ENCODE measurements at regions of chrX and their contacts with region 1.

Region 1: GRCh38 chrX:24241822-24242648 is 71.8 kb downstream of the SUPT20HL2 start:
- DNase-seq: peak; percentile 58
- H3K4me3 Mint-ChIP-seq: no peak overlapping the region
- H3K27ac Mint-ChIP-seq: no peak overlapping the region
- H3K4me1 Mint-ChIP-seq: peaks cover 20% of the 10 kb centered on the region
- H3K27me3 Mint-ChIP-seq: peaks cover 27% of the 10 kb centered on the region
- CTCF ChIP-seq: peak; percentile 36

Region 2: DNA sequence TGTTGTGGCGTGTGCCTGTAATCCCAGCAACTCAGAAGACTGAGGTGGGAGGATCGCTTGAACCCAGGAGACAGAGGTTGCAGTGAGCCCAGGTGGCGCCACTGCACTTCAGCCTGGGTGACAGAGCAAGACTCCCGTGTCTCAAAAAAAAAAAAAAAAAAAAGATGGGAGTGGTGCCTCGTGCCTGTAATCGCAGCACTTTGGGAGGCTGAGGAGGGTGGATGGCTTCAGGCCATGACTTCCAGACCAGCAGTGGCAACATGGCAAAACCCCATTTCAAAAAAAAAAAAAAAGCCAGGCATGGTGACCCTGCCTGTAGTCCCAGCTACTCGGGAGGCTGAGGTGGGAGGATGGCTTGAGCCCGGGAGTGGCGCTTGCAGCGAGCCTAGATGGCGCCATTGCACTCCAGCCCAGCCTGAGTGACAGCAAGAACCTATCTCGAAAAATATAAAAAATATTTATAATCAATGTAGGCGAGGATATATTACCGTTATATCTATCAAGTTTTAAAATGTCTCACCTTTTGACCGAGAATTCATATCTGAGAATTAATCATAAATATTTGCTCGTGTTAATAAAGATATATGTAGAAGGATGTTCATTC is 160.3 kb before region 1 on chrX:
- CTCF ChIA-PET with region 1: interaction called, 7 read pairs
- POLR2A ChIA-PET with region 1: interaction called, 4 read pairs
- intact Hi-C with region 1: loop called (anchors 1 kb)
- DNase-seq: peak; percentile 84
- H3K4me3 Mint-ChIP-seq: peak overlapping the region; percentile 21
- H3K27ac Mint-ChIP-seq: no peak overlapping the region
- H3K4me1 Mint-ChIP-seq: no peaks in the 10 kb centered on the region
- H3K27me3 Mint-ChIP-seq: no peaks in the 10 kb centered on the region
- CTCF ChIP-seq: peak; percentile 65

Region 3: GRCh38 chrX:24231131-24231540 is 10.9 kb before region 1 on chrX:
- CTCF ChIA-PET with region 1: interaction called, 28 read pairs
- POLR2A ChIA-PET with region 1: interaction called, 3 read pairs
- intact Hi-C with region 1: no loop called
- DNase-seq: peak; percentile 63
- H3K4me3 Mint-ChIP-seq: no peak overlapping the region
- H3K27ac Mint-ChIP-seq: no peak overlapping the region
- H3K4me1 Mint-ChIP-seq: peaks cover 6% of the 10 kb centered on the region
- H3K27me3 Mint-ChIP-seq: peaks cover 30% of the 10 kb centered on the region
- CTCF ChIP-seq: no peak

Region 4: DNA sequence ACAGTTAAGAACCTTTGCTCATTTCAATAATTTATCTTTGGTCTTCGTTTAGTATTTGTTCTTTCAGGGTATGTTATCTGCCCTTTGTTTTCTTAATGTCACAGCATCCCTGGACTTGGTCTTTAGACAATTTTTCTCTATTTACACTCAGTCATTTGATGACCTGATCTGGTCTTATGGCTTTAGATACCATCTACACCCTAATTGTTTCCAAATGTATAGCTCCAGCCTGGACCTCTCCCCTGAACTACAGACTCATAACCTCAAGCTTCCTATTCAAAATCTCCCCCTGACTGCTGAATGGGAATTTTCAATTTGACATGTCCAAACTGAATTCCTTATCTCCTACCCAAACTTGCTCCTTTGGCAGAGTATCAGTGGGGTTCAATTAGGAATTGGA is 75.5 kb after region 1 on chrX:
- CTCF ChIA-PET with region 1: no interaction called
- POLR2A ChIA-PET with region 1: no interaction called
- intact Hi-C with region 1: no loop called
- DNase-seq: no peak
- H3K4me3 Mint-ChIP-seq: no peak overlapping the region
- H3K27ac Mint-ChIP-seq: no peak overlapping the region
- H3K4me1 Mint-ChIP-seq: no peaks in the 10 kb centered on the region
- H3K27me3 Mint-ChIP-seq: peaks cover 81% of the 10 kb centered on the region
- CTCF ChIP-seq: no peak